Naive thymus-derived CD4-positive, alpha-beta T cell (primary cell): ENCODE measurements at regions of chr17 and their contacts with region 1.

Region 1: DNA sequence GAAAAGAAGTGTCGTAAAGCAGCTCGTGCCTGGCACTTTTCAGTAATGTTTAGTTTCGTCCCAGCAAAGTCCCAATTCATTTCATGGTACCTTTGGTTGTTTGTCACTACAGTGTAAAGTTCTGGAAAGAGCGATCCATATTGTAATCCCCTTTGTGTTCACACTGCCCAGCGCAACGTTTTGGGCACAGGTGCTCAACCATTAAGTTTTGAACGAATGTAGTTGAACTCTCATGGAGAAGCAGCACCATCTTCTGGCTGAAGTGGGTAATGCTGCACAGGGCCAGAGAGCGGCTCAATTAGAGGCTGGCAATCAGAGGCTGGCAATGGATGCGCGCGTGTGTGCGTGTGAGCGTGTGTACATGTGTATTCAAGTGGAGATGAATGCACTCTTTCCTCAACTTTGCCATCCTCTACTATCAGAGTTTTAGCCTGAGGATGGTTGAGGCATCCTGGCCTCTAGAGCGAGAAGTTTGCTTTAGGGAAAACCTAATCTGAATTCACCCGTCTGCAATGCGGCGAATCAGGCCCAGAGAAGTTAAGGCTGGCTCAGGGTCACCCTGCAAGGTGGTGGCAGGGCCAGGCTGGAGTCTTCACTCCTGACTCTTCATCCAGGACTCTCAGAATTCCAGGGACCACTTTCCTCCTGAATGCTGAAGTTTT is 29.9 kb downstream of the DYNLL2 start:
- DNase-seq: peak; percentile 62 to 86 (median 76)
- ATAC-seq: peak; percentile 96
- H3K4me3 ChIP-seq: no peak overlapping the region
- H3K4me3 Mint-ChIP-seq: no peak overlapping the region
- H3K27ac ChIP-seq: no peak overlapping the region
- H3K27ac Mint-ChIP-seq: peak overlapping the region in 1 of 9 donors; percentile 3
- H3K4me1 ChIP-seq: no peaks in the 10 kb centered on the region
- H3K4me1 Mint-ChIP-seq: peaks cover 0 to 5% (median 0%) of the 10 kb centered on the region in 7 donors
- H3K27me3 ChIP-seq: no peaks in the 10 kb centered on the region
- H3K27me3 Mint-ChIP-seq: peaks cover 0 to 16% (median 8%) of the 10 kb centered on the region in 5 donors

Region 2: DNA sequence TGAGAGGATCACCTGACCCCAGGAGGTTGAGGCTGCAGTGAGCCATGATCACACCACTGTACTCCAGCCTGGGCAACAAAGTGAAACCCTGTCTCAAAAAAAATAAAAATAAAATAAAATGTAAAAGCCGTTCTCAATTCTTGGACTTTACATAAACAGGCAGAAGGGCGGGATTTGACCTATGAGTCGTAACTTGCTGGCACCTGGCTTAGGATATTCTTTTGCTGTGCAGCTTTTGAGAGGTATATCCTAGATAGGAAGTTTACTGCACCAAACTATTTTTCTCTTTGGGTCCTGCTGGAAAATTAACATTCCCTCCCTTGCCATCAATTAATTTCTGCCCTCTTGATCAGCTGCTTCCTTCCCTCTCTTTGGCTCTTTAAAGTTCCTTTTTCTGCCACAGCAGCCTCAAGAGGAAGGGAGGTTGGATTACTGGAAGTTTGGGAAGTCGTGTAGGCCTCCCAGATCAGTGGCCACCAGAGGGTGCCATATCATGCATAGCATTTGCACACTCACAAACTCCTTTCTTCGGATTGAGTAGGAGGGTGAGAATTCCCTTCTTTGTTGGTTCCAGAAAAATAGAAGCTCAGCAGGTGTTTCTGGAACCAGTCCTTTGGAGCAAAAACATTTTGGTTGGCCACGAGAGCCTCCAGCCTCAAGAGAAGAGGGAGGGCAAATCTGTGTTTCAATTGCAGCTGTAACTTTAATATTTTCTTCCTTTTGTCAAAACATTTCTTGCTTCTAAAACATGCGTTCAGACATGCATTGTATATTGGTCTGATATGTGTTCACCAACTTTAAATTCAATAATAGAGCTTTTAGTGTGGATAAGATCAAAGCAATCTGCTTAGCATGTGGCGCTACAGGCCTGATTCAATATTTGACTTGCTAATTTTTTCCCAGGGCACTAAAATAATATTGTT is 515.3 kb before region 1 on chr17:
- CTCF ChIA-PET with region 1: no interaction called
- POLR2A ChIA-PET with region 1: no interaction called
- intact Hi-C with region 1: loop called in 1 of 2 experiments (anchors 2 kb)
- DNase-seq: peak in 2 of 9 donors; percentile 14 to 19
- ATAC-seq: peak; percentile 55
- H3K4me3 ChIP-seq: no peak overlapping the region
- H3K4me3 Mint-ChIP-seq: peak overlapping the region in 5 of 10 donors; percentile 15 to 69 (median 25)
- H3K27ac ChIP-seq: peak overlapping the region; percentile 34
- H3K27ac Mint-ChIP-seq: peak overlapping the region; percentile 66 to 97 (median 94)
- H3K4me1 ChIP-seq: peaks cover 48 to 53% of the 10 kb centered on the region in 2 donors
- H3K4me1 Mint-ChIP-seq: peaks cover 44 to 65% (median 55%) of the 10 kb centered on the region in 7 donors
- H3K27me3 ChIP-seq: no peaks in the 10 kb centered on the region
- H3K27me3 Mint-ChIP-seq: no peaks in the 10 kb centered on the region

Region 3: GRCh38 chr17:57747221-57748017 is 365.7 kb before region 1 on chr17:
- CTCF ChIA-PET with region 1: no interaction called
- POLR2A ChIA-PET with region 1: no interaction called
- intact Hi-C with region 1: no loop called
- DNase-seq: peak in 8 of 9 donors; percentile 18 to 65 (median 50)
- ATAC-seq: peak; percentile 66
- H3K4me3 ChIP-seq: no peak overlapping the region
- H3K4me3 Mint-ChIP-seq: no peak overlapping the region
- H3K27ac ChIP-seq: no peak overlapping the region
- H3K27ac Mint-ChIP-seq: peak overlapping the region in 1 of 9 donors; percentile 2
- H3K4me1 ChIP-seq: no peaks in the 10 kb centered on the region
- H3K4me1 Mint-ChIP-seq: peaks cover 0 to 6% (median 0%) of the 10 kb centered on the region in 7 donors
- H3K27me3 ChIP-seq: no peaks in the 10 kb centered on the region
- H3K27me3 Mint-ChIP-seq: peaks cover 0 to 15% (median 4%) of the 10 kb centered on the region in 5 donors

Region 4: DNA sequence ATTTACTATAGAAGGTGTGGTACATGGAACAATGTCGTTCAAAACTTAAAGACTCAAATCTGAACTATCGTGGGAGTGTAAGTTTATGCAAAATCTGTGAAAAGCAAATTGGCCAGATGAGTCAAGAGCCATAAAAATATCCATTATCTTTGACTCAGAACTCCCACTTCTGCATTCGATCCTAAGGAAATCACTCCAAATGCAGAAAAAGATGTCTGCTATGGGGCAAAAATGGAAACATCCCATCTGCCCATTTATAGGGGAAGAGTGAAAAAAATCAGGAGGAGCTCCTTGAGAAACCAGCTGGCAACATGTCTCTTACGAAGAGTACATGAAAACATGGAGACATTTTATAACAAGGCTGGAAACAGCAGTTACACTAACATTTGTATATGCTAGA is 324.4 kb before region 1 on chr17:
- CTCF ChIA-PET with region 1: no interaction called
- POLR2A ChIA-PET with region 1: no interaction called
- intact Hi-C with region 1: no loop called
- DNase-seq: no peak
- ATAC-seq: no peak
- H3K4me3 ChIP-seq: no peak overlapping the region
- H3K4me3 Mint-ChIP-seq: no peak overlapping the region
- H3K27ac ChIP-seq: no peak overlapping the region
- H3K27ac Mint-ChIP-seq: peak overlapping the region in 1 of 9 donors; percentile 2
- H3K4me1 ChIP-seq: no peaks in the 10 kb centered on the region
- H3K4me1 Mint-ChIP-seq: peaks cover 0 to 4% (median 0%) of the 10 kb centered on the region in 7 donors
- H3K27me3 ChIP-seq: no peaks in the 10 kb centered on the region
- H3K27me3 Mint-ChIP-seq: peaks cover 16 to 53% (median 43%) of the 10 kb centered on the region in 5 donors

Region 5: GRCh38 chr17:57861000-57861789 is 251.9 kb before region 1 on chr17:
- CTCF ChIA-PET with region 1: interaction called, 46 read pairs
- POLR2A ChIA-PET with region 1: no interaction called
- intact Hi-C with region 1: loop called (anchors 1 kb)
- DNase-seq: peak in 5 of 9 donors; percentile 21 to 36 (median 27)
- ATAC-seq: peak; percentile 83
- H3K4me3 ChIP-seq: peak overlapping the region; percentile 60
- H3K4me3 Mint-ChIP-seq: peak overlapping the region; percentile 83 to 89 (median 86)
- H3K27ac ChIP-seq: no peak overlapping the region
- H3K27ac Mint-ChIP-seq: no peak overlapping the region
- H3K4me1 ChIP-seq: peaks cover 0 to 7% of the 10 kb centered on the region in 2 donors
- H3K4me1 Mint-ChIP-seq: peaks cover 9 to 16% (median 13%) of the 10 kb centered on the region in 7 donors
- H3K27me3 ChIP-seq: peaks cover 0 to 4% of the 10 kb centered on the region in 2 donors
- H3K27me3 Mint-ChIP-seq: peaks cover 0 to 45% (median 12%) of the 10 kb centered on the region in 5 donors

Region 6: DNA sequence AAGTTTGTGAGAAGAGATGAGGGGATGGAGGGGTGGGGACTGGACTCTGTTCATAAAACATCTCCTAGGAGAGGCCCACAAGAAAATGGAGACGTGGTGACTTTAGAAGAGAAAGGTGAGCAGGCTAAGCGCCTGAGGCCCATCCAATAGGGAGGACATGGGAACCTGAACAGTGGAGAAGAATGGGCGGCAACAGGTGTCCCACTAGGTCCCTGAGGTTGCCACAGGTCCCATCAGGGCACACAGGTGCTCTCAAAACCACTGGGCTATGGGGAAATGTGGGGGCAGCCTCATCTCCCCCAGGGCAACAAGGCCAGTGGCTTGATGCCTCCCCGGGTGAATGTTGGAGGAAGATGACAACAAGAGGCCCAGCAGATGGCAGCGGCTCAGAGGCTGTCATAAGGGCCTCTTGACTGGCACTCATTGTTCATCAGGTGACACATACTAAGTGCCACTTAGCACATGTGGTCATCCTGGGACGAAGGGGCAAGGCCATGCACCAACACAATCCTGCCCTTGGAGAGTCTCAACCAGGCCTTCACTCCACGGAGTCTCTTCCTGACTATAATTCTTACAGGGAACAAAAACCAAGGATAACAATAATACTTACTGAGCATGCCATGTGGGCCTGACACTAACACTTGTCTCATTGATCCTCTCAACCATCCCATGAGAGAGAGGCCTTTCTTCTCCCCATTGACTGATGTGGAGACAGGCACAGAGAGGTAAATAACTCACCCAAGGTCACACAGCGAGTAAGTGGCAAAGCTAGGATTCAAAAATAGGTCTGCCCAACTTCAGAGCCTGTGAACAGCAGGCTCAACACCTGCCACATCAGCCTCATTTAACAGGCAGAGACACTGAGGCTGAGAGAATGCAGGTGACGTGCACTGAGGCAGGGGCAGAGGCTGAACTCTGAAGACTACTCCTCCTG is 195.9 kb before region 1 on chr17:
- CTCF ChIA-PET with region 1: interaction called, 5 read pairs
- POLR2A ChIA-PET with region 1: no interaction called
- intact Hi-C with region 1: loop called in 1 of 2 experiments (anchors 1 kb)
- DNase-seq: peak in 5 of 9 donors; percentile 8 to 45 (median 33)
- ATAC-seq: peak; percentile 68
- H3K4me3 ChIP-seq: no peak overlapping the region
- H3K4me3 Mint-ChIP-seq: no peak overlapping the region
- H3K27ac ChIP-seq: no peak overlapping the region
- H3K27ac Mint-ChIP-seq: peak overlapping the region in 1 of 9 donors; percentile 31
- H3K4me1 ChIP-seq: no peaks in the 10 kb centered on the region
- H3K4me1 Mint-ChIP-seq: peaks cover 0 to 3% (median 0%) of the 10 kb centered on the region in 7 donors
- H3K27me3 ChIP-seq: no peaks in the 10 kb centered on the region
- H3K27me3 Mint-ChIP-seq: peaks cover 0 to 25% (median 0%) of the 10 kb centered on the region in 5 donors

Region 7: DNA sequence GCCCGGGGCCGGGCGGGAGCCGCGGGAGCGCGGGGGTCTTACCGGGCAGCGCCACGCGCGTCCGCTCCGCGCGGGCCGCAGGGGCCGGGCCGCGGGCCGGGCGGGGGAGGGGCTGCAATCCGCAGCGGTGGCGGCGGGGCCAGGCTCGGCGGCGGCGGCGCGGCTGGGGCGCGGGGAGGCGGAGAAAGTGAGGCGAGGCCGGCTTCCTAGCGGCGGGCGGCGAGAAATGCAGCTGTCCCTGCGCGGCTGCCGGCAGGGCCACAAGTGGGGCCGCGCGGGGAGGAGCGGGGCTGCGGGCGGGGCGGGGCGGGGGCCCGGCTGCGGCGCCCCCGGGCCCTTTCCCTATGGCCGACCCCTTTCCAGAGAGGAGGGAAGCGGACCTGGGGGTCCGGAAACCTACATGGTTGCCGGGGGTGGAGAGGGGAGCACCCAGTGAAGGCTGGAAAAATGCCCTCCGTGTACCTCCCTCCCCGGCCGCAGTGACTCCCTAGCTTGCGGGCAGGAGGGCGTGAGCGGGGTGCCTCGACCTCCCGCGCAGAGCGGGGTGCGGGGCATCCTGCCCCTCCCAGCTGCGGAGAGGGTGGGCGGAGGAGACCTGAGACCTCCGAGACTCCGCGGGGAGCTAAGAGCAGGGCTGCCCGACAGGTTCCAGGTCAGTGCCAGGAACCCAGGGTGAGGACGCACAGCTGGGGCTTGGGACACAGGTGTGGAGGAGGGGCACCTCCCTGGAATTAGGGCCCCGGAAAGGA is 157.7 kb before region 1 on chr17 and contains the start of gene CUEDC1:
- CTCF ChIA-PET with region 1: no interaction called
- POLR2A ChIA-PET with region 1: no interaction called
- intact Hi-C with region 1: no loop called
- DNase-seq: peak; percentile 21 to 76 (median 51)
- ATAC-seq: peak; percentile 92
- H3K4me3 ChIP-seq: peak within 1 kb of the TSS; percentile 54
- H3K4me3 Mint-ChIP-seq: peak within 1 kb of the TSS; percentile 74 to 87 (median 81)
- H3K27ac ChIP-seq: no peak within 1 kb of the TSS
- H3K27ac Mint-ChIP-seq: peak within 1 kb of the TSS in 4 of 9 donors; percentile 24 to 67 (median 55)
- H3K4me1 ChIP-seq: peaks cover 14% of the 10 kb centered on the region in 2 donors
- H3K4me1 Mint-ChIP-seq: peaks cover 6 to 36% (median 30%) of the 10 kb centered on the region in 7 donors
- H3K27me3 ChIP-seq: no peaks in the 10 kb centered on the region
- H3K27me3 Mint-ChIP-seq: peaks cover 4 to 63% (median 9%) of the 10 kb centered on the region in 5 donors
- total RNA-seq, gene CUEDC1: 0.10 to 7.7 (median 1.0) TPM

Region 8: GRCh38 chr17:58172369-58173071 is 59.4 kb after region 1 on chr17:
- CTCF ChIA-PET with region 1: interaction called, 15 read pairs
- POLR2A ChIA-PET with region 1: no interaction called
- intact Hi-C with region 1: no loop called
- DNase-seq: peak in 7 of 9 donors; percentile 42 to 69 (median 61)
- ATAC-seq: peak; percentile 80
- H3K4me3 ChIP-seq: no peak overlapping the region
- H3K4me3 Mint-ChIP-seq: peak overlapping the region in 9 of 10 donors; percentile 8 to 71 (median 35)
- H3K27ac ChIP-seq: no peak overlapping the region
- H3K27ac Mint-ChIP-seq: peak overlapping the region in 8 of 9 donors; percentile 2 to 96 (median 74)
- H3K4me1 ChIP-seq: peaks cover 38 to 39% of the 10 kb centered on the region in 2 donors
- H3K4me1 Mint-ChIP-seq: peaks cover 31 to 49% (median 48%) of the 10 kb centered on the region in 7 donors
- H3K27me3 ChIP-seq: no peaks in the 10 kb centered on the region
- H3K27me3 Mint-ChIP-seq: peaks cover 0 to 20% (median 2%) of the 10 kb centered on the region in 5 donors